ENCODE measurements at regions of chr18 and their contacts with region 1.

Region 1: GRCh38 chr18:8912348-8913326 is 189.9 kb upstream of the NDUFV2 start:
- DNase-seq: peak; percentile 98
- H3K4me3 ChIP-seq: peak overlapping the region; percentile 49
- H3K27ac ChIP-seq: peak overlapping the region; percentile 98
- H3K4me1 ChIP-seq: peaks cover 52% of the 10 kb centered on the region
- CTCF ChIP-seq: peak; percentile 36; the same call in 1 of the 2 replicates

Region 2: DNA sequence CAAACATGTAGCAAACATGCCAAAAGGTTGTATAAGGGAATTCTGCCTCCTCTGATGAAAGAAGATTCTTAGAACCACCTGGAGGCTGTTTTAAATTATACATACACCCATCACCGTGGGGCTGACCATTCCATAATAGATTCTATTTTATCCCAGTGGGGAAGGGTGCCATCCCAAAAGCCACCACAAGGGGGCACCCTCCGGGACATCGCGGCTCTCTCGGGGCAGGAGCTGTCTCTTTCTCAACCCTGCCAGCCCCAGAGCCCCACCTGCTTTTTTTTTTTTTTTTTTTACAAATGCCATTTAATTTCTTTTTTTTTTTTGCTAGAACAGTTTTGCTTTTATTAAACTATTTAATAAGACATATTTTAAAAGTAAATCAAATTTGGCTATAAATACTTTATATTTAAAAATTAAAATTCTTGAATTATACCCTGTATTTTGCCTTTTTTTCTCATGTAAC is 215.9 kb before region 1 on chr18:
- CTCF ChIA-PET with region 1: no interaction called
- POLR2A ChIA-PET with region 1: no interaction called
- intact Hi-C with region 1: loop called (anchors 1 kb)
- DNase-seq: peak; percentile 75
- H3K4me3 ChIP-seq: peak overlapping the region; percentile 28
- H3K27ac ChIP-seq: peak overlapping the region; percentile 79
- H3K4me1 ChIP-seq: peaks cover 23% of the 10 kb centered on the region
- CTCF ChIP-seq: peak; percentile 97

Region 3: DNA sequence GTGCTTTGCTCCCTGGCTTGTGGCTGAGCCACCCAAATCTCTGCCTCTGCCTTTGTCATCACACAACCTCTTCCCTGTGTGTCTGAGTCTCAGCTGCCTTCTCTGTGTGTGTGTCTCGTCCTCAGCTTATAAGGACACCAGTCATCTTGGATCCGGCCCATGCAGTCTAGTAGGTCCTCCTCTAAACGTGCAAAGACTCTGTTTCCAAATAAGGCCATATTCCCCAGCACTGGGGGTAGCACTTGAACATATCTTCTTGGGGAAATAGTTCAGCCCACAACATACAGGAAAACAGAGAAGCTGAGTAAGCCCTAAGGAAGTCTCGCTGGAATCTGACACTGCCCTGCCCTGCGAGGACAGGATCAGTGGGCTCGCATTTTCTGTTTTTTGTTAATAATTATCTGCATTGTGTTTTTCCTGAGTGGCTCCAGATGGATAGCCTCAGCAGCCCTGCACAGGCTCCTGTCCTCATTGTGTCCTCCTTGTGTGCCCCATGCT is 165.1 kb before region 1 on chr18:
- CTCF ChIA-PET with region 1: no interaction called
- POLR2A ChIA-PET with region 1: interaction called, 4 read pairs
- intact Hi-C with region 1: loop called (anchors 1 kb)
- DNase-seq: no peak
- H3K4me3 ChIP-seq: no peak overlapping the region
- H3K27ac ChIP-seq: peak overlapping the region; percentile 99
- H3K4me1 ChIP-seq: peaks cover 94% of the 10 kb centered on the region
- CTCF ChIP-seq: no peak

Region 4: GRCh38 chr18:8982416-8983184 is 70.0 kb after region 1 on chr18:
- CTCF ChIA-PET with region 1: interaction called, 4 read pairs
- POLR2A ChIA-PET with region 1: interaction called, 6 read pairs
- intact Hi-C with region 1: loop called (anchors 2 kb)
- DNase-seq: peak; percentile 91
- H3K4me3 ChIP-seq: no peak overlapping the region
- H3K27ac ChIP-seq: no peak overlapping the region
- H3K4me1 ChIP-seq: peaks cover 63% of the 10 kb centered on the region
- CTCF ChIP-seq: peak; percentile 96

Measured in OCI-LY7 (cell line).